Head of caudate nucleus (tissue), 42 donors: ENCODE measurements at regions of chr20 and their contacts with region 1.

Region 1: GRCh38 chr20:44609511-44610312 is 27.3 kb downstream of the PKIG start:
- DNase-seq: peak; percentile 63 to 96 (median 90)

Region 2: DNA sequence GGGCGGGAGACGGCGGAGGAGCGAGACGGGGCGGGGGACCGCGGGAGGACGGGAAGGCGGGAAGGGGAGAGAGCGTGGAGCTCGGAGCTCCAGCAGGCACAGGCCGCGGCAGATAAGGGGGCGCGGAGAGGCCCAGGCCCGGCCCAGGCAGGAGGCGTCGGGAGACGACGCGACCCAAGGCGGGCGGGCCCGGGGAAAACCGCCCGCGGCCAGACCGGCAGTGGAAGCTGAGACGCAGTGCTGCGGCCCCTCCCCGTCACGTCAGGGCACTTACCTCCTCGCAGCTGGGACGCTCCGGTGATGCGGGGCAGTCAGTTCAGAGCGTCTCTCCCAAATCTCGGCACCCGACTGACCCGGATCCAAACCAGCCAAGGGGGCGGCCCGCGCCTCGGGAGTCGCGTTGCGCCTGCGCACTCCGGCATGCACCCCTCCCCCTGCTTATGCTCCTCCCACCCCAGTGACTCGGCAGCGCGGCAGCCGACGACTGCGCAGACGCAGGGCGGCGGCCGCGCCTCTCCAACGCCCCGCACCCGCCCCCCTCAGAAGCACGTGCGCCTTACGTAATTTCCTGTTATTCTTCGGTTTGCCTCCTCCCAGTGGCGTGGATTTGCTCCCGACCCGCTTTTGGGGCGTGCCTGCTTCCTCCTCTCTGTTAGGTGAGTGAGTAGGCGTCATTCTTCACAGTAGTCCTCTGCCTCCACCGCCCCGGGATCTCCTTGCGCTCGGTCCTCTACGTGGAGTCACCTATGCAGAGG is 399.1 kb before region 1 on chr20 and contains the start of gene OSER1:
- intact Hi-C with region 1: loop called (anchors 10 kb)
- DNase-seq: peak; percentile 95 to 99 (median 97)

Region 3: GRCh38 chr20:44388466-44389023 is 221.2 kb before region 1 on chr20:
- intact Hi-C with region 1: loop called (anchors 5 kb)
- DNase-seq: peak in 37 of 42 donors; percentile 6 to 75 (median 40)

Region 4: GRCh38 chr20:44475694-44476560 is 133.8 kb before region 1 on chr20 and contains the start of gene TTPAL:
- intact Hi-C with region 1: loop called (anchors 10 kb)
- DNase-seq: peak; percentile 62 to 95 (median 88)

Region 5: GRCh38 chr20:44521484-44522481 is 87.9 kb before region 1 on chr20 and contains the start of gene SERINC3:
- intact Hi-C with region 1: loop called (anchors 5 kb)
- DNase-seq: peak; percentile 92 to 98 (median 96)

Region 6: DNA sequence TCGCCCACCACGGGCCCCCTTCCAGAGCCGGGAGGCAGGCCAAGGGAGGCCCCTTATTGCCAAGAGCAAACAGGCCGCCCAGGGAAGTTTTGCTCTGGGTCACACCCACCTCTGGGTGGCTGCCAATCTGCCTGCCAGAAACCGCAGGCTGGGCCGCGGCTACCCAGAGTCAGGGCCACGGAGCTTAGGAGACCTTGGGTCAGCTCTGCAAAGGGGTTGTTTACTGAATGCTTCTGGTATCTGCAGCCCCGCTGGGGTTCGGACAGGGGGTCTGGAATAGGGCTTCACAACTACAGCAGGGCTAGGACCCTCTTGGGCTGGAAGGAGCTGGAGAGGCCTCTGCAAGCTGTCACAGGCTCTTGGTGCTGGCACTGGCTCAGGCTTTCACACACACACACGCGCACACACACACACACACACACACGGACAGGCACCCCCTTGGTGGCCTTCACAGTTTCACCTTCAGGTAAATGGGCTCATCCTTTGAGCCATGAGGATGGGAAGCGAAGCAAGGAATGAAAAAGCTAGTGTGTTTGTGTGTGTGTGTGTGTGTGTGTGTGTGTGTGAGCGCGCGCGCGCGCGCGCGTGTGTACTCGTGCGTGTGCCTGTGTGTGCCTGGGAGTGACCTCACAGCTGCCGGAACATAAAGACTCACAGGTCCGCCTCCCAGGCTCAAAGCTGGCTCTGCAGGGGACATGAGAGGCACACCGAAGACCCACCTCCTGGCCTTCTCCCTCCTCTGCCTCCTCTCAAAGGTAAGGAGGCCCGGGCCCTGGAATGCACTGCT is 105.2 kb after region 1 on chr20 and contains the start of gene CCN5:
- intact Hi-C with region 1: no loop called
- DNase-seq: peak; percentile 46 to 87 (median 77)

Region 7: DNA sequence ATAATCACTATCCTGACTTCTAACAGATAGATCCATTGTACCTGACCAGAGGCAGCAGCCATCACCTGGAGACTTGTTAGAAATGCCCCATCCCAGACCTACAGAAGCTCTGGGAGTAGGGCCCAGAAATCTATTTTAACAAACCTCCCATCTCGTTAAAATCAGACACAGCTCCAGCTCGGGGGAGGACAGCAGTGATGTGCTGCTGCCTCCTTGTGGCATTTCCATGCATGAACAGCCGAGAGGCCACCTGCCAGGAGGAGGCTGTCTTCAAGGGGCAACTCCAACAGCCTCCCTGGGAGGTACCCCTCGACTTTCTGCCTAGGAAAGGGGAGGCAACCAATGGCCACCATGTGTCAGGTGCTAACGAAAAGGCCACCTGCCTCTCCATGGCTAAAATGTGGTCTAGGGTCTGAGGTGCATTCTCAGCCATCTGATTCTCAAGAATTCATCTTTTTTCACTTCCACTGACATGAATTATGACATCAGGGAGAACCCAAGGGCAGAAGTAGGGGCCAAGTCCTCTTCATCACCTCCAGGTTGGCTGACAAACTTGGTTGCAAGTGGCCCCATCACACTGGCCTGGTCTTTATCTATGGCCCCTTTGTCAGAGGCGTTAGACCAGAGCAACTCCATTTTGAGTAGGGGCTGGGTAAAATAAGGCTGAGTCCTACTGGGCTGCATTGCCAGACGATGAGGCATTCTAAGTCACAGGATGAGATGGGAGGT is 123.8 kb after region 1 on chr20:
- intact Hi-C with region 1: loop called (anchors 10 kb)
- DNase-seq: peak; percentile 66 to 93 (median 84)

Region 8: GRCh38 chr20:44849703-44850102 is 240.0 kb after region 1 on chr20:
- intact Hi-C with region 1: no loop called
- DNase-seq: no peak